ENCODE measurements at regions of chr10 and their contacts with region 1.

Region 1: DNA sequence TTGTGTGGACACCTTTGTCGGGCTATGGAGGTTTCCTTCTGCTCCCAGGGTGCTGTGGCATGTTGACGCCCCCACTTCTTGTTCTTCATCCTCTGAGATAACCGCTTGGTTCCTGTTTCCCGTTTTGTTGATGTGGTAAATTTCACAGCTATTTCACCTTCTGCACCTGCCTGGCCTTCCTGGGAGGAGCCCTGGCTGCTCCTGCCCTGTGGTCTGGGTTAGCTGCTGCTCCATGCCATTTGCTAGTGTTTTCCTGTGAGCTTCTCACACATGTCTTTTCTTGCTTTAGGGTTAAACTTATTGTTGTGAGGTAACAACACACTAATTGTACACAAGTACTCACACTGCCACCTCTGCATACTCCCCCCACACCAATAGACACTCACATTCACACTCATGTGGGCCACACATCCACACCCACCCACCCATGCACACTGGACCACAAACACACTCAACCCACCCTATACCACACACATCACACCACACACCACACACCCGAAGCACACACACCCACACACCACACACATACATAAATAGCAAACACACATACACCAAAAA is 46.5 kb upstream of the MSMB start:
- DNase-seq: peak; percentile 85
- H3K4me3 ChIP-seq: peak overlapping the region; percentile 31
- H3K27ac ChIP-seq: peak overlapping the region; percentile 74
- H3K4me1 ChIP-seq: peaks cover 78% of the 10 kb centered on the region
- CTCF ChIP-seq: no peak

Region 2: GRCh38 chr10:45495438-45496152 is 597.0 kb before region 1 on chr10:
- CTCF ChIA-PET with region 1: no interaction called
- POLR2A ChIA-PET with region 1: no interaction called
- intact Hi-C with region 1: no loop called
- DNase-seq: peak; percentile 8
- H3K4me3 ChIP-seq: no peak overlapping the region
- H3K27ac ChIP-seq: no peak overlapping the region
- H3K4me1 ChIP-seq: no peaks in the 10 kb centered on the region
- CTCF ChIP-seq: no peak

Region 3: GRCh38 chr10:46273506-46274477 is 181.2 kb after region 1 on chr10:
- CTCF ChIA-PET with region 1: interaction called, 13 read pairs
- POLR2A ChIA-PET with region 1: interaction called, 9 read pairs
- intact Hi-C with region 1: loop called (anchors 10 kb)
- DNase-seq: no peak
- H3K4me3 ChIP-seq: no peak overlapping the region
- H3K27ac ChIP-seq: no peak overlapping the region
- H3K4me1 ChIP-seq: peaks cover 40% of the 10 kb centered on the region
- CTCF ChIP-seq: peak; percentile 63

Region 4: GRCh38 chr10:46284293-46285229 is 192.0 kb after region 1 on chr10:
- CTCF ChIA-PET with region 1: interaction called, 14 read pairs
- POLR2A ChIA-PET with region 1: no interaction called
- intact Hi-C with region 1: no loop called
- DNase-seq: peak; percentile 89
- H3K4me3 ChIP-seq: peak overlapping the region; percentile 71
- H3K27ac ChIP-seq: peak overlapping the region; percentile 39
- H3K4me1 ChIP-seq: peaks cover 27% of the 10 kb centered on the region
- CTCF ChIP-seq: no peak

Measured in OCI-LY7 (cell line).